Activated CD4-positive, alpha-beta T cell treated with anti-CD3 and anti-CD28 coated beads for 36 hours (primary cell): ENCODE measurements at regions of chr6 and their contacts with region 1.

Region 1: GRCh38 chr6:106444777-106445507 is 84.4 kb downstream of the CRYBG1 start:
- DNase-seq: no peak
- ATAC-seq: peak; percentile 88
- H3K4me3 Mint-ChIP-seq: no peak overlapping the region
- H3K27ac Mint-ChIP-seq: no peak overlapping the region
- H3K4me1 Mint-ChIP-seq: peaks cover 19% of the 10 kb centered on the region
- H3K27me3 Mint-ChIP-seq: peaks cover 25% of the 10 kb centered on the region

Region 2: DNA sequence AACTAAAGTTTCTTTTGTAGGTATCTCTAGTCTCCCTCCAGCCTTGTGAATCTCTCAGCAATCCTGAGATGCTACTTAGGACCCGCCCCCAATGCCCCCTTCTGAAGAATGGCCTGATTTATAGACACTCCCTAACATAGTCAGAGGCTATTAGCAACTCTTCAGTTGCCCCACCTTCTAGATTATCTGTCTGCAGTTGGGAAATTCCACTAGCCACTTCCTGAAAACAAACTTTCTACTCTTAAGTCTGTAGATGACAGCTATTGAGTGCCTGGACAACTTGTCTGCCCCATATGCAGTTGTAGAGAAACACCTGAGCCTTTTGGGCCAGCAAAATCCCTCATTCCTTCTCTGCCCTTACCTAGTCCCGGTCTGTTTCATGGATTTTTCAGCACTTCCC is 853.9 kb before region 1 on chr6:
- CTCF ChIA-PET with region 1: no interaction called
- POLR2A ChIA-PET with region 1: no interaction called
- intact Hi-C with region 1: no loop called
- DNase-seq: peak; percentile 7
- ATAC-seq: peak; percentile 81
- H3K4me3 Mint-ChIP-seq: no peak overlapping the region
- H3K27ac Mint-ChIP-seq: no peak overlapping the region
- H3K4me1 Mint-ChIP-seq: peaks cover 34% of the 10 kb centered on the region
- H3K27me3 Mint-ChIP-seq: no peaks in the 10 kb centered on the region

Region 3: GRCh38 chr6:106290954-106291353 is 154.0 kb before region 1 on chr6:
- CTCF ChIA-PET with region 1: no interaction called
- POLR2A ChIA-PET with region 1: no interaction called
- intact Hi-C with region 1: no loop called
- DNase-seq: no peak
- ATAC-seq: no peak
- H3K4me3 Mint-ChIP-seq: no peak overlapping the region
- H3K27ac Mint-ChIP-seq: no peak overlapping the region
- H3K4me1 Mint-ChIP-seq: peaks cover 12% of the 10 kb centered on the region
- H3K27me3 Mint-ChIP-seq: no peaks in the 10 kb centered on the region

Region 4: DNA sequence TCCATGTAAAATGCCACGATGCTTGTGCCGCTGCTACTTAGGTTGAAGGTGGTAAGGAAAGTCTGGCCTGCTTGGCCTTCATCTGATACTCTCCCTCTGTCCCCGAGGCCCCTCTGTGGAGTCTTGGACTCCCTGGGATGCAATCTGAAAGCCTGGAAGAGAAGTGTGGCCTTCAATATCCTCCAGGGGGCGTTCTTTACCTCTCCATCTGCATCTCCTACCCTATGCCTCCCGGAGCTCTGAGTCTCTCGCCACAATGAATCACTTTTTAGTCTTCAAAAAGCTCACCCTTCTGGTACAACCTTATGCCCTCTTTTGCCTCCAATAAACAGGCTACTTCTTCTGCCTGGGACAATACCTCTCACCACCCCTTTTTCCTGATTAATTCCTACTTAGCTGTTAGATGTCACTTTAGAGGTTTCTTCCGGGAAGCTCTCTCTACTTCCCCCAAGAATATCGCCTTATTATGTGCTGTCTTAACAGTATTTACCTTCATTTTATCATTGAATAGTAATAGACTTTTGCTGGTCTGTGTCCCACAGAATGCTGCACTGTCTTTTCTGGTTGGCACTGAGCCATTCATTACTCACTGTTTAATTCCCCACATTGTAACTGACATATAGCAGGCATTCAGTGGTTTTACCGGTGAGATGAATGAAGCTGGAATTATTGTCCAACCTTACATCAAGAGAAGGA is 105.5 kb before region 1 on chr6:
- CTCF ChIA-PET with region 1: interaction called, 44 read pairs
- POLR2A ChIA-PET with region 1: no interaction called
- intact Hi-C with region 1: loop called (anchors 1 to 2 kb)
- DNase-seq: peak; percentile 68
- ATAC-seq: peak; percentile 98
- H3K4me3 Mint-ChIP-seq: no peak overlapping the region
- H3K27ac Mint-ChIP-seq: no peak overlapping the region
- H3K4me1 Mint-ChIP-seq: peaks cover 5% of the 10 kb centered on the region
- H3K27me3 Mint-ChIP-seq: peaks cover 34% of the 10 kb centered on the region

Region 5: GRCh38 chr6:106466211-106466610 is 21.3 kb after region 1 on chr6:
- CTCF ChIA-PET with region 1: interaction called, 12 read pairs
- POLR2A ChIA-PET with region 1: no interaction called
- intact Hi-C with region 1: no loop called
- DNase-seq: no peak
- ATAC-seq: no peak
- H3K4me3 Mint-ChIP-seq: no peak overlapping the region
- H3K27ac Mint-ChIP-seq: no peak overlapping the region
- H3K4me1 Mint-ChIP-seq: no peaks in the 10 kb centered on the region
- H3K27me3 Mint-ChIP-seq: peaks cover 11% of the 10 kb centered on the region

Region 6: DNA sequence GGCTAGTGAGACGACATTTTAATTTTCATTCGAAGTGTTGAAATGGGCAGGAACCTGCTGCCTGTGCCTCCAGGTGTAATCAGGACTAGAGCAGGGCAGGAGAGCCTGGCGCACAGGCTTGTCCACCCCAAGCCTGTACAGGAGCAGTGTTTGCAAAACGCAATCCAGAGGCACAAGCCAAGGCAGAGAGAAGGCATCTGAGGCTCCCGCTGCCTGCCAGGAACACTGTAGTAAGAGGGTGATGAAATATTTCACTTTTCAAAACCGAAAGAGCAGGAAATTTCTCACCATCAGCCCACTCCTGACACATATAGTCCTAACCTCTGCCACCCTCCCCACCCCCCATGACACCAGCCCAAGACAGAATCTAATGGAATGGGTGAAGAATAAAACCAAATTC is 51.9 kb after region 1 on chr6:
- CTCF ChIA-PET with region 1: no interaction called
- POLR2A ChIA-PET with region 1: no interaction called
- intact Hi-C with region 1: no loop called
- DNase-seq: no peak
- ATAC-seq: no peak
- H3K4me3 Mint-ChIP-seq: no peak overlapping the region
- H3K27ac Mint-ChIP-seq: peak overlapping the region; percentile 19
- H3K4me1 Mint-ChIP-seq: peaks cover 14% of the 10 kb centered on the region
- H3K27me3 Mint-ChIP-seq: no peaks in the 10 kb centered on the region

Region 7: GRCh38 chr6:106574741-106575458 is 130.0 kb after region 1 on chr6:
- CTCF ChIA-PET with region 1: interaction called, 280 read pairs
- POLR2A ChIA-PET with region 1: no interaction called
- intact Hi-C with region 1: no loop called
- DNase-seq: no peak
- ATAC-seq: peak; percentile 12
- H3K4me3 Mint-ChIP-seq: no peak overlapping the region
- H3K27ac Mint-ChIP-seq: peak overlapping the region; percentile 55
- H3K4me1 Mint-ChIP-seq: no peaks in the 10 kb centered on the region
- H3K27me3 Mint-ChIP-seq: no peaks in the 10 kb centered on the region

Region 8: GRCh38 chr6:106783631-106784566 is 339.0 kb after region 1 on chr6:
- CTCF ChIA-PET with region 1: no interaction called
- POLR2A ChIA-PET with region 1: no interaction called
- intact Hi-C with region 1: no loop called
- DNase-seq: no peak
- ATAC-seq: no peak
- H3K4me3 Mint-ChIP-seq: no peak overlapping the region
- H3K27ac Mint-ChIP-seq: no peak overlapping the region
- H3K4me1 Mint-ChIP-seq: no peaks in the 10 kb centered on the region
- H3K27me3 Mint-ChIP-seq: peaks cover 11% of the 10 kb centered on the region

Region 9: GRCh38 chr6:106979427-106979884 is 534.5 kb after region 1 on chr6:
- CTCF ChIA-PET with region 1: interaction called, 19 read pairs
- POLR2A ChIA-PET with region 1: no interaction called
- intact Hi-C with region 1: loop called (anchors 1 kb)
- DNase-seq: peak; percentile 91
- ATAC-seq: peak; percentile 60
- H3K4me3 Mint-ChIP-seq: no peak overlapping the region
- H3K27ac Mint-ChIP-seq: no peak overlapping the region
- H3K4me1 Mint-ChIP-seq: peaks cover 5% of the 10 kb centered on the region
- H3K27me3 Mint-ChIP-seq: peaks cover 29% of the 10 kb centered on the region